Activated CD4-positive, alpha-beta memory T cell treated with anti-CD3 and anti-CD28 coated beads, Interleukin-2, amount 10 ng/mL, durations not matched to agents 7 days and 5 days (primary cell): ENCODE measurements at regions of chr3 and their contacts with region 1.

Region 1: DNA sequence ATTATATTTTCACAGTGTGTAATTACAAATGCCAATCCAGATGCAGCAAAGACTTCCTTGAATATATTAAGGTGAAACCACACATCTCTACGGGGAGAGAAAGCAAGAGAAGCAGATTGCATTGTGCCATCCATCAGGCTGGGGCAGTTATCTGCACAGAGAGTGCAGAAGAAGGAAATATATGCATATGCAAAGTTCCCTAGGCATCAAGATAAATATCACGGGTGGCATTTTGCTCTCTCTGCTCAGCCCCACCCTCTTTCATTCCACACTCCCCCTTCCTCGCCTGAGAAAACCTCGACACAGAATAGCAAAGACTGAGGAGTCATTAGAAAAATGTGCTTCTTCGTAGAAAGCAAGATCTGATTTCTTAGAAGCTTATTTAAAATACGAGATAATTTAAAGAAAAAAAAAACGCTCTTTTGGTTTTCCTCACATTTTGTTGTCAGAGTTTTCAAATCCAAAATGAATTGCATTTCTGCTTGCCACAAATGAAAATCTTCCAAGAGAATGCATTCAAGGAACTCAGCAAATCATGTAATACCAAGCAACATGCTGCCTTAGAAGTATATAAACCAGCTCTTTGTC is 283.2 kb upstream of the LMCD1 start:
- DNase-seq: no peak
- H3K4me3 Mint-ChIP-seq: no peak overlapping the region
- H3K27ac Mint-ChIP-seq: no peak overlapping the region
- H3K4me1 Mint-ChIP-seq: no peaks in the 10 kb centered on the region
- H3K27me3 Mint-ChIP-seq: no peaks in the 10 kb centered on the region

Region 2: GRCh38 chr3:8239718-8240695 is 21.6 kb after region 1 on chr3:
- CTCF ChIA-PET with region 1: interaction called, 11 read pairs
- POLR2A ChIA-PET with region 1: no interaction called
- DNase-seq: peak; percentile 24
- H3K4me3 Mint-ChIP-seq: no peak overlapping the region
- H3K27ac Mint-ChIP-seq: no peak overlapping the region
- H3K4me1 Mint-ChIP-seq: no peaks in the 10 kb centered on the region
- H3K27me3 Mint-ChIP-seq: no peaks in the 10 kb centered on the region

Region 3: GRCh38 chr3:8282541-8283165 is 64.2 kb after region 1 on chr3:
- CTCF ChIA-PET with region 1: no interaction called
- POLR2A ChIA-PET with region 1: no interaction called
- DNase-seq: no peak
- H3K4me3 Mint-ChIP-seq: no peak overlapping the region
- H3K27ac Mint-ChIP-seq: no peak overlapping the region
- H3K4me1 Mint-ChIP-seq: no peaks in the 10 kb centered on the region
- H3K27me3 Mint-ChIP-seq: no peaks in the 10 kb centered on the region